Motor neuron (in vitro differentiated cells): ENCODE measurements at regions of chr17 and their contacts with region 1.

Region 1: DNA sequence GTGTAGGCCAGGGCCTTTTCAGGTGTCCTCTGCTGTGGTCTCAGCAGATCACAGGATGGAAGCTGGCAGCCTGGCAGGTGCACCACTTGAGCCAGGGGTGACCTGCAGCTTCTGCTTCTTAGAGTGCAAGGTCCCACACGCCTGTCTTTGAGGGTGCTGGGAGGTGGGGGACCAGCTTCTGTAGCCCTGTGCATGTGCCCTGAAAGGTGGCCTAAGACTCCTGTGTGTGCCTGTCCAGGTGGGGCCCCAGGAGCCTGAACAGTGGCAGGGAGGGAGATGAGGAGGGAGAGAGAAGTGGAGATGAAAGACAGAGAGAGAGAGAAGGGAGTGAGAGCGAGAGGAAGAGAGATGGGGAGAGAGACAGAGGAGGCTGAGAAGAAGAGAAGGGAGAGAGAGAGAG is 46.2 kb downstream of the LGALS9 start:
- ATAC-seq: no peak
- H3K4me3 ChIP-seq: no peak overlapping the region
- H3K27ac ChIP-seq: no peak overlapping the region
- H3K4me1 ChIP-seq: no peaks in the 10 kb centered on the region

Region 2: DNA sequence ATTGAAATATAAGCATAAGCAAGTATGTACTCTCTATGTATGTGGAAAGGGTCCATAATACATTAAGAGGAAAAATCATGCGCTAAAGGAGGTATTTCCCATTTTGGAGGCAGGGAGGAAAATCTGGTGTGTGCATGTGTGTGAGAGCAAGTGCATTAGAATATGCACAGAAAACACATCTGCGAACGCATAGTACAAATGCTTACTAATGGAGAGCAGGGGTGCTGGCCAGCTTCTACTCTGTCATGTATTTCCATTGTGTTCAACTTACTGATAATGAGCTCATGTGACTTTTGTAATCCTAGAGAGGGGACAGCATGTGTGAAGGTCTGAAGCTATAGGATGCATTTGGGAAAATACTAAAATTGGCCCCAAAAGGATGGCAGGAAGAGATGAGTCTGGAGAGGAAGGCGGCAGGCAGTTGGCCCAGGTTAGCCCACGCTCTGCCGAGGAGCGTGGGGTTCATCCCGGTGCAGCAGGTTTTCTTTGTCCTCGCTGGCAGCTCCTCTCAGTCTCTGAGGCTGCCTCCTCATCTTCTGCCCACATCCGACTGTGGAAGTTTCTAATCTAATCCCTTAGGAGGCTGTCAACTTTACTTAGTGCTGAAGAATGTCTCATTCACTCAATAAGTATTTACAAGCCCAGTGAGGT is 238.7 kb before region 1 on chr17:
- in situ Hi-C with region 1: no loop called
- ATAC-seq: peak in 6 of 8 experiments; percentile 61 to 99 (median 88)
- H3K4me3 ChIP-seq: no peak overlapping the region
- H3K27ac ChIP-seq: no peak overlapping the region
- H3K4me1 ChIP-seq: no peaks in the 10 kb centered on the region

Region 3: DNA sequence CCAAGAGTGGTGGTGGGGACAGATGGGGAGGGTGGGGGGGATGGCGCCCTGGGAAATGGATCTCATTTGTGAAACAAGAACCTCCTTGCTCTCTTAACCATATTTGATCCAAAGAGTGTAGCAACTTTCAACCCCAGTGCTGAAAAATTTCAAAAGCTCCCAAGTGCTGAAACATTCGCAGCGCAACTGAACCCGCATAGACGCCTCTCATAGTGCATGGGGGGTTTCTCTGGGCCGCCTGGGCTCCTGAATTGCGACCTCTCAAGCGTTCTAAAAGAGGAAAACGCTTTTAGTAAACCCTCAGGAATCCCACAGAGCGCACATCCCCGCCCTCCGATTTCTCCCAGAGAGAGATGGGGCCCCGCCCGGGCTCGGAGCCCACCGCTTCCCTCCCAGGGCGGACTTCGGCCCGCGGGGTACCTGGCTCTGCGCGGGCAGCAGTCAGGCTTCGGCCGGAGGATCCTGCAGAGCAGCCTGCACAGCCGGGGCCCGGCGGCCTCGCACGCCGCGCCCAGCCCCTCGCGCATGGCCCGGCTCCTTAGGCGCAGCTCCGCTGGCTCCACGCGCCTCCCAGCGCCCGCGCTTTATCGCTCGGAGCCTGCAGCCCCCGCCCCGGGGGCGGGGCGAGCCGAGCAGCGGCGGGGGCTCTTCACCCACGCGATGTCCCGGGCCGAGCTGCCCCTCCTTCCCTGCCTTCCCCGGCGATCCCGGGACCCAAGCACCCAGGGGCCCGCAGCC is 116.1 kb after region 1 on chr17:
- in situ Hi-C with region 1: loop called in 1 of 9 experiments (anchors 25 kb)
- ATAC-seq: peak; percentile 88 to 97 (median 94)
- H3K4me3 ChIP-seq: peak overlapping the region; percentile 16 to 34 (median 25)
- H3K27ac ChIP-seq: no peak overlapping the region
- H3K4me1 ChIP-seq: no peaks in the 10 kb centered on the region

Region 4: GRCh38 chr17:27846042-27846655 is 169.0 kb after region 1 on chr17:
- in situ Hi-C with region 1: loop called in 2 of 9 experiments (anchors 25 kb)
- ATAC-seq: no peak
- H3K4me3 ChIP-seq: no peak overlapping the region
- H3K27ac ChIP-seq: no peak overlapping the region
- H3K4me1 ChIP-seq: no peaks in the 10 kb centered on the region

Region 5: GRCh38 chr17:27975146-27976011 is 298.2 kb after region 1 on chr17:
- in situ Hi-C with region 1: no loop called
- ATAC-seq: peak in 6 of 8 experiments; percentile 21 to 88 (median 51)
- H3K4me3 ChIP-seq: no peak overlapping the region
- H3K27ac ChIP-seq: no peak overlapping the region
- H3K4me1 ChIP-seq: no peaks in the 10 kb centered on the region